A673 (cell line): ENCODE measurements at regions of chr12 and their contacts with region 1.

Region 1: GRCh38 chr12:49147384-49147783 is 16.2 kb upstream of the TUBA1B start:
- DNase-seq: no peak
- H3K4me3 ChIP-seq: no peak overlapping the region
- H3K27ac ChIP-seq: no peak overlapping the region
- H3K4me1 ChIP-seq: no peaks in the 10 kb centered on the region
- H3K27me3 ChIP-seq: no peaks in the 10 kb centered on the region
- CTCF ChIP-seq: no peak

Region 2: DNA sequence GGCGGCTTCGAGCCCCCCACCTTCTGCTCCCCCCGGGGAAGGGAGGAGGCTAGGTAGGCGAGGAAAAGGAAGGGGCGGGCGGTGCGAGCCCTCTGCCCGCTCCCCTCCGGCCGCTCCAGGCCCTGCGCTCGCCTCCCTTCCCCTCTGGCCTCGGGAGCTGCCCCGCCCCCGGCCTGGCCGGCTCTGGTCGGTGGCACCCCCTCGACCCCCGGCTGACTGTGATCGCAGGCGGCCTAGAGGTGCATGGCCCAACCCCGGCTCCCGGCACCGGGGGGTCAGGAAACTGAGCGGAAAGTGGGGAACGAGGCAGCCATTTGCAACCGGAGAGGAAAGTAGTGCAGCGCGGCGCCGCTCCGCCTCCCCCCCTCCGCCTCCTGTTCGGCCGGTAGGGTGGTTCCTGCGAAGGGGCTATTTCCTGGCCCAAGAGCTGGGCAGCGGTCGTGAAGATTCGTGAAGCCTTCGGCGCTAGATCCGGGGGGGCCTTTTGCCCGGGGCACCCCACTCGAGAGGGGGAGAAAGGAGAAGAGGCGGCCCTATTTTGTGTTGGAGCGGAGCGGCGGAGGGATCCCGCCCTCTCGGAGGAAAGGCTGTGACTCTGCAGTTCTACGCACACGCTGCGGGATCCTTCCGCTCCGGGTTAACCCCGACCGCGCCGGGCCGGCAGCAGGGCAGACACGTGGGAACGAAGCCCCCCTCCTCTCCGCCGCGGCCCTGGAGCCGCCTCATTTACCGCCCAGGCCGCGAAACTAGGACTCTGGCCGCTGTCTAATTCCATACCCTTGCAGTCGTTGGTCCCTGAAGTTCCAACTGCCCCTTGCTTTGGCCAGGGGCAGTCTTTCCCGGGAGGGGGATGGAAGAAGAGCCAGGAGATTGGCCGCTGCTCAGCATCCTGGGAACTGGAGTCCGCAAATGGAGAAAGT is 86.9 kb before region 1 on chr12 and contains the start of gene KMT2D:
- CTCF ChIA-PET with region 1: no interaction called
- POLR2A ChIA-PET with region 1: no interaction called
- intact Hi-C with region 1: no loop called
- DNase-seq: peak; percentile 98
- H3K4me3 ChIP-seq: peak within 1 kb of the TSS; percentile 98
- H3K27ac ChIP-seq: peak within 1 kb of the TSS; percentile 100
- H3K4me1 ChIP-seq: peaks cover 18% of the 10 kb centered on the region
- H3K27me3 ChIP-seq: no peaks in the 10 kb centered on the region
- CTCF ChIP-seq: peak; percentile 29; the same call in 1 of the 2 replicates
- total RNA-seq, gene KMT2D: 121 and 138 TPM in 2 replicates

Region 3: DNA sequence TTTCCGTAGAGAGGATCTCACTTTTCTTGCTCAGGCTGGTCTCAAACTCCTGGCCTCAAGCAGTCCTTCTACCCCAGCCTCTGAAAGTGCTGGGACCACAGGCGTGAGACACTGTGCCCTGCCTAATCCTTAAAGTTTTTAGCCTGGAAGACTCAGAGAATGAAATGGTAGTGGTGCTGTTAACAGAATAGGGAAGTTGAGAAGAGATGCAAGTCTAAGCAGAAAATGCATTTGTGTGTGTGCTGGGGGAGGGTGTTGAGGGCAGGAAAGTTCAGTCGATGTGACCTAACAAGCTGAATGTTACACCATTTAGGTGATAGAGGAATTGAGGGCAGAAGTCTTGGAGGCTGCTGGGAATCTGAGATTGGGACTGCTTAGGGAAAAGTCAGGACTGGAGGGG is 48.4 kb after region 1 on chr12:
- CTCF ChIA-PET with region 1: interaction called, 12 read pairs
- POLR2A ChIA-PET with region 1: no interaction called
- intact Hi-C with region 1: no loop called
- DNase-seq: no peak
- H3K4me3 ChIP-seq: no peak overlapping the region
- H3K27ac ChIP-seq: no peak overlapping the region
- H3K4me1 ChIP-seq: peaks cover 19% of the 10 kb centered on the region
- H3K27me3 ChIP-seq: no peaks in the 10 kb centered on the region
- CTCF ChIP-seq: no peak